WTC11 (cell line): ENCODE measurements at regions of chrX and their contacts with region 1.

Region 1: GRCh38 chrX:107272431-107272921 is 66.1 kb downstream of the DNAAF6 start:
- DNase-seq: peak; percentile 62
- ATAC-seq: peak; percentile 96
- H3K4me3 Mint-ChIP-seq: peak overlapping the region; percentile 70
- H3K27ac Mint-ChIP-seq: no peak overlapping the region
- H3K4me1 Mint-ChIP-seq: 0 out of 2 replicates have a peak, but pooled peaks cover 4% of the 10 kb centered on the region
- H3K27me3 Mint-ChIP-seq: peaks cover 23% of the 10 kb centered on the region
- CTCF ChIP-seq: no peak

Region 2: GRCh38 chrX:106932492-106932923 is 340.0 kb before region 1 on chrX:
- CTCF ChIA-PET with region 1: no interaction called
- POLR2A ChIA-PET with region 1: no interaction called
- DNase-seq: no peak
- ATAC-seq: no peak
- H3K4me3 Mint-ChIP-seq: no peak overlapping the region
- H3K27ac Mint-ChIP-seq: no peak overlapping the region
- H3K4me1 Mint-ChIP-seq: no peaks in the 10 kb centered on the region
- H3K27me3 Mint-ChIP-seq: no peaks in the 10 kb centered on the region
- CTCF ChIP-seq: no peak

Region 3: DNA sequence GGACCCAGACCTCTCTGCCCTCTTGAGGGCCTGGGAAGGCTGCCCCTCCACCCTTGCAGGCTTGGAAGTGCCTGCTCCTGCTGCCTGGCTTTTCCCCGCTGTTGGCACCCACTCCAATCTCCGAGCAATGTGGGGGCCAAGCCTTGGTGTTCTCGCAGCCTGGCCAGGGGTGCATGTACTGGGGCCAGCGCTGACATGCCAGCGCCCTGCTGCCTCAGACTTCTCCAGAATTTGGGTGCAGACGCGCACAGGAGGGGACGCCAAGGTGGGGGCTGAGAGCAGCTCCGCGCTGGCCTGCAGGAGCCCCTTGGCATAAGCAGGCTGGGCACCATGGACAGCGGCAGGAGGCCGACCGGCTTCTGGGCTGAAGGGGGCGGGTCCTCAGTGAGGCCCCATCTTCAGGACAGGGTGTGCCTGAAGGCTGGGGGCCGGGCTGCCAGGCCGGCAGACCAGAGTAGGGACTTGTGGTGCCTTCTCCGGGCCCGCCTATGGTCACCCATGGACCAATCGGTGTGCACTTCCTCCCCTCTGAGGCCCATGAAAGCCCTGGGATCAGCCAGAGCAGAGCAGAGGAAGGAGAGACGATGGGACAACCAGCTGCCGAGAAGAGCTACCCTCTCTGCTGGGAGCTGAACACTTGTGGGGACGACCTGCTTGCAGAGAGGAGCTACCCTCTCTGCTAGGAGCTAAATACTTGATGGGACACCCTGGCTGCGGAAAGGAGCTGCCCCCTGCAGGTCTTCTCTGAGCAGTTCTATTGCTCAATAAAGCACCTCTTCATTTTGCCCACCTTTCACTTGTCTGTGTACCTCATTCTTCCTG is 52.2 kb after region 1 on chrX:
- CTCF ChIA-PET with region 1: interaction called, 17 read pairs
- POLR2A ChIA-PET with region 1: no interaction called
- DNase-seq: peak; percentile 81
- ATAC-seq: peak; percentile 99
- H3K4me3 Mint-ChIP-seq: peak overlapping the region; percentile 47
- H3K27ac Mint-ChIP-seq: no peak overlapping the region
- H3K4me1 Mint-ChIP-seq: peaks cover 2% of the 10 kb centered on the region; the same call in 1 of the 2 replicates
- H3K27me3 Mint-ChIP-seq: no peaks in the 10 kb centered on the region
- CTCF ChIP-seq: no peak

Region 4: DNA sequence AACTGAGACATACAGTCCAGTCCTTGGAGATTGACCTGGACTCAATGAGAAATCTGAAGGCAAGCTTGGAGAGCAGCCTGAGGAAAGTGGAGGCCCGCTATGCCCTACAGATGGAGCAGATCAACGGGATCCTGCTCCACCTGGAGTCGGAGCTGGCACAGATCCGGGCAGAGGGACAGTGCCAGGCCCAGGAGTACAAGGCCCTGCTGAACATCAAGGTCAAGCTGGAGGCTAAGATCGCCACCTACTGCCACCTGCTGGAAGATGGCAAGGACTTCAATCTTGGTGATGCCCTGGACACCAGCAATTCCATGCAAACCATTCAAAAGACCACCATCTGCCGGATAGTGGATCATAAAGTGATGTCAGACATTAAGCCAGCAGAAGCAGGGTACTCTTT is 156.6 kb after region 1 on chrX:
- CTCF ChIA-PET with region 1: interaction called, 10 read pairs
- POLR2A ChIA-PET with region 1: no interaction called
- DNase-seq: peak; percentile 56
- ATAC-seq: no peak
- H3K4me3 Mint-ChIP-seq: no peak overlapping the region
- H3K27ac Mint-ChIP-seq: no peak overlapping the region
- H3K4me1 Mint-ChIP-seq: no peaks in the 10 kb centered on the region
- H3K27me3 Mint-ChIP-seq: no peaks in the 10 kb centered on the region
- CTCF ChIP-seq: peak; percentile 26